ENCODE measurements at regions of chr11 and their contacts with region 1.

Region 1: GRCh38 chr11:67507864-67508485 is at the start of gene CDK2AP2:
- DNase-seq: peak; percentile 98 to 100
- H3K4me3 ChIP-seq: peak within 1 kb of the TSS; percentile 65 to 71
- H3K27ac ChIP-seq: peak within 1 kb of the TSS; percentile 95 to 96
- H3K4me1 ChIP-seq: peaks cover 16 to 27% of the 10 kb centered on the region in 2 donors
- H3K27me3 ChIP-seq: no peaks in the 10 kb centered on the region
- CTCF ChIP-seq: no peak
- total RNA-seq, gene CDK2AP2: 159 TPM

Region 2: GRCh38 chr11:67265633-67266423 is 242.1 kb before region 1 on chr11:
- intact Hi-C with region 1: loop called (anchors 5 kb)
- DNase-seq: peak in 1 of 2 donors; percentile 85
- H3K4me3 ChIP-seq: peak overlapping the region; percentile 23 to 39
- H3K27ac ChIP-seq: peak overlapping the region; percentile 73 to 80
- H3K4me1 ChIP-seq: peaks cover 39 to 41% of the 10 kb centered on the region in 2 donors
- H3K27me3 ChIP-seq: no peaks in the 10 kb centered on the region
- CTCF ChIP-seq: peak; percentile 61 to 95 (median 72)

Region 3: DNA sequence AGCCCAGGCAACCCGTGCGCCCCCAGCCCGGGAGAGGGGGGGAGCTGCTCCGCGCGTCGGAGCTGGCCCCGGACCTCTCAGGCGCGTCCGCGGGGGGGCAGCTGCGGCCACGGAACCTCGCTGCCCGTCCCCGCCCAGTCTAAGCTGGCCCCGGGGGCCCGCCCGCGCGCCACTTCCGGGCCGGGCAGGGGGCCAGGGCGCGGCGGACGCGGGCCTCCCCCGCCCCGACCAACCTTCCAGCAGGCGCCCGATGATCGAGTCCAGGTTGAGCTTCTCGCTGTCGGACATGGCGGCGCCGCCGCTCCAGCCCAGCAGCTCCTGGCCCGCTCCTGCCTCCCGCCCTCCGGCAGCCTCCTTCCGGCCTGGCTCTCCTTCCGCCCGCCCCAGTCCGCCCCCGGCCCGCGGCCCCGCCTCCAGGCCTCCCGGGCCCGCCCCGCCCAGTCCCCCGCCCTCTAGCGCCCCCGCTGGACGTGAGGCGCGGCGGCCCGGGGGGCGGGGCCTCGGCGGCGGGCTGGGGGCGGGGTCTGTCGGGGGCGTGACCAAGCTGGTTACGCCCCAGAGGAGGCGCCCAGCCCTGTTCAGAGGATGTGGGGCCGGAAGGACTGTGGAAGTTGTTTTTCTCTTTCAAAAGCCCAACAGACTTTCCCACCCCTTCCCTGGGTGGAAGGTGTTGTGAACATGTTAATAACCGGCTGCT is 106.3 kb before region 1 on chr11 and contains the start of gene PPP1CA:
- intact Hi-C with region 1: loop called (anchors 1 kb)
- DNase-seq: peak; percentile 63 to 94
- H3K4me3 ChIP-seq: peak within 1 kb of the TSS; percentile 88 to 99
- H3K27ac ChIP-seq: peak within 1 kb of the TSS; percentile 90 to 94
- H3K4me1 ChIP-seq: peaks cover 15 to 19% of the 10 kb centered on the region in 2 donors
- H3K27me3 ChIP-seq: no peaks in the 10 kb centered on the region
- CTCF ChIP-seq: peak; percentile 21 to 60 (median 38)
- total RNA-seq, gene PPP1CA: 113 TPM

Region 4: DNA sequence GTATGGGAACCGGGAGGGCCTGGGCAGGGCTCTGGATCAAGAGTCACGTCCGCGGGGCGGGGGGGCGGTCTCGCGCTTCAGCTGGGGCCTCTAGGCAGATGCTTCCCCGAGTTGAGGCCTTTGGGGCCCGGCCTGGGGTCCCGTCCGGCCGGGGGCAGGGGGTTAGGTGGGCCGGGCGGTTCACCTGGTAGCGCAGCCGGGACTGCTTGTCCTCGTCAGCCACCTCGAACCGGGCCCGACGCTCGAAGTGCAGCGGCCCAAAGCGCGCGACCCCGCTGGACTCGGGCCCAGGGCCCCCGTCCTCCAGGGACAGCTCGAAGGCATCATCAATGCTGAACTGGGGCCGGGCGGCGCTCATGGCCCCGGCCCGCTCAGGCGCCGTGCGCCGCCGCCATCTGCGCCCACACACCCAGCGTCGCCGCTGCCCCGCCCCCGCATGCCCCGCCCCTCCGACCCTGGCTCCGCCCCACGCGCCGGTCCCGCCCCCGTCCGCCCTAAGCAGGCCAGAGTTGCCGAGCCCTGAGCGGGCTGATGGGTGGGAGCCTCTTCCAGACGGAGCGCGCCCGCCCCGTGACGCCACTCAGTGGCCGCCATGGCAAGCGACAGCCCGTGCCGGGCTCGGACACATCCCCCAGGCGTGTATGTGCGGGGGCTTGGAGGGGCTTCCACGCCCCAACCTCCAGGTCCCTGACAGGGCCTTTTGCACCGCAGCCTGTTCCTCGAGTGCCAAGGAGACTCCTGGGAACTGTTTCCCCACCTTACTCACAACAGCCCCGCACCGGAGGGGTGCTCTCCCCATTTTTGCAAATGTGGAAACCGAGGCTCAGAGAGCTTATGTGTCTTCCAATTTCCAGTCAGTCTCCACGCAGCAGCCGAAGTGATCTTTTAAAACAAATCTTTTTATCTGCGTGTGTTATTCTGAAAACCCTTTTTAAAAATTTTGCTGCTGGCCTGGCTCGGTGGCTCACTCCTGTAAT is 38.9 kb before region 1 on chr11 and contains the start of gene TMEM134:
- intact Hi-C with region 1: loop called (anchors 1 kb)
- DNase-seq: peak; percentile 58 to 95
- H3K4me3 ChIP-seq: peak within 1 kb of the TSS; percentile 61 to 69
- H3K27ac ChIP-seq: peak within 1 kb of the TSS; percentile 71 to 89
- H3K4me1 ChIP-seq: peaks cover 3 to 19% of the 10 kb centered on the region in 2 donors
- H3K27me3 ChIP-seq: no peaks in the 10 kb centered on the region
- CTCF ChIP-seq: peak; percentile 59 to 64 (median 61)
- total RNA-seq, gene TMEM134: 189 TPM

Region 5: GRCh38 chr11:67558084-67558781 is 50.3 kb after region 1 on chr11:
- intact Hi-C with region 1: loop called (anchors 1 kb)
- DNase-seq: peak in 1 of 2 donors; percentile 79
- H3K4me3 ChIP-seq: peak overlapping the region in 1 of 2 donors; percentile 45
- H3K27ac ChIP-seq: peak overlapping the region; percentile 49 to 59
- H3K4me1 ChIP-seq: peaks cover 0 to 26% of the 10 kb centered on the region in 2 donors
- H3K27me3 ChIP-seq: no peaks in the 10 kb centered on the region
- CTCF ChIP-seq: no peak

Region 6: DNA sequence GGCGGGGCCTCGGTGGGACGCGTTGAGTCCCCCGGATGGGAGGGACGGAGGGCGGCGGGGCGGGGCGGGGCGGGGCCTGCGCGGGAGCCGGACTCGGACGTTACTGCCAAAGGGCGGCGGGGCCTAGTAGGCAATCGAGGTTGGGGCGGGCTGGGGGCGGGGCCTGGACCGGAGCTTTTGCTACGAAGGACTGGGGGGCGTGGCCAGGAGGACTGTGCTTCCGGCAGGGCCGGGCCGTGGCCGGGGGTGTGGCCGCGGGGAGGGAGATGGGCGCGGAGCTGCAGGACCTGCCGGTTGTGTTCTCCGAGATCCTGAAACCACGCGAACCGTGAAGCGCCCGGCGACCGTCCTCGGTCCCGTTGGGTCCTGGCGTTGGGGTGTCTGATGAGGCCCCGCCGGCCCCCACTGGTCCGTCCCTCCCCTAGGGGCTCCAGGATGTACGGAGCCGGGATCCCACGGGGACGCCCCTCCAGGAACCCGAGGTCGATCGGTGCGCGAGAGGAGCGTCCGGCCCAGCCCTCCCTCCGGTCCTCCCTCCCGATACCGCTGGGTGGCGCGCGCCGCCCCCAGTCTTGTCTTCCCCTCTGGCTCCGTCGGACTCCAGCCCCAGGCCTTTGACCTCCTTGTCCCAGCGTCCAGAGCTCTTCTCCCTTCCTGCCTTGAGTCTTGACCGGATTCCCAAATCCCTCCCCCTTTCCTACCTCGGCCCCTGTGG is 122.4 kb after region 1 on chr11:
- intact Hi-C with region 1: loop called (anchors 1 kb)
- DNase-seq: peak; percentile 90 to 99
- H3K4me3 ChIP-seq: peak overlapping the region; percentile 65 to 80
- H3K27ac ChIP-seq: peak overlapping the region; percentile 81 to 92
- H3K4me1 ChIP-seq: peaks cover 4 to 6% of the 10 kb centered on the region in 2 donors
- H3K27me3 ChIP-seq: no peaks in the 10 kb centered on the region
- CTCF ChIP-seq: peak; percentile 78 to 83 (median 79)